Activated CD8-positive, alpha-beta T cell treated with anti-CD3 and anti-CD28 coated beads for 36 hours (primary cell): ENCODE measurements at regions of chr17 and their contacts with region 1.

Region 1: DNA sequence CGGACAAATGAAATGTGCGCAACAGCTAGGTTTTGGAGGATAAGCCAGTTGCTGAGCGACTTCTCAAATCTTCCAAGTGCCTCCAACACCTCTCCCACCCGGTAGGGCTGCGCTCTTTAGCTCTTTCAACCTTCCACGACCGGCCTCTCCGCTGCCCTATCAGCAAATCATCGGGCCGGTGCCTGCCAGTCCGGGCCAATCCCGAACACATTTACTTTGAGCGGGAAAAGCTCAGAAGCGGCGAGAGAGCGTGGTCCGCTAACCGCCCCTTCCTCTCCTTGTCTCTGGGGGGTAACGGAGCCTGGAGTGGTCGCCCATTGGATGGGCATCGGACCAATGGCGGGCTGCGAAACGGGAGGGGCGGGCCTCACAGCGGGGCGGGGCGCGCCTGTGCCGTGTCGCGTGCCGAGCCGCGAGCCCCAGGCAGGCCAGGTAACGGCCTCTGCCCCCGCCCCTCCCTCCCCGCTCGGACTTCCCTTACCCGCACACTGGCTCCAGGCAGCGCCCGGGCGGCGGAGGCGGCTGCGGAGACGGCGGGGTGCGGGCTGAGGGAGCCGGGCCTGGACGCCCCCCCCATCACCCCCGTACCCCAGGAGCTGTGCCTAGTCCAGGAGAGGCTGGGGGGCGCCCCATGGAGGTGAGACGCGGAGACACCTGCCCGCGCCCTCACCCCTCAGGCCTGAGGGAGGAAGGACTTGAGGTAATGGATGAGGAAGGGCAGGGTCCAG is at the start of gene MEIOC:
- DNase-seq: peak; percentile 46
- ATAC-seq: peak; percentile 88
- H3K4me3 Mint-ChIP-seq: peak within 1 kb of the TSS; percentile 67
- H3K27ac Mint-ChIP-seq: no peak within 1 kb of the TSS
- H3K4me1 Mint-ChIP-seq: peaks cover 7% of the 10 kb centered on the region
- H3K27me3 Mint-ChIP-seq: peaks cover 27% of the 10 kb centered on the region
- CTCF ChIP-seq: no peak
- total RNA-seq, gene MEIOC: 0.16 to 0.25 TPM

Region 2: GRCh38 chr17:44672479-44673093 is 16.4 kb after region 1 on chr17:
- CTCF ChIA-PET with region 1: interaction called, 10 read pairs
- POLR2A ChIA-PET with region 1: no interaction called
- intact Hi-C with region 1: no loop called
- DNase-seq: no peak
- ATAC-seq: no peak
- H3K4me3 Mint-ChIP-seq: no peak overlapping the region
- H3K27ac Mint-ChIP-seq: no peak overlapping the region
- H3K4me1 Mint-ChIP-seq: no peaks in the 10 kb centered on the region
- H3K27me3 Mint-ChIP-seq: no peaks in the 10 kb centered on the region
- CTCF ChIP-seq: peak; percentile 63

Region 3: DNA sequence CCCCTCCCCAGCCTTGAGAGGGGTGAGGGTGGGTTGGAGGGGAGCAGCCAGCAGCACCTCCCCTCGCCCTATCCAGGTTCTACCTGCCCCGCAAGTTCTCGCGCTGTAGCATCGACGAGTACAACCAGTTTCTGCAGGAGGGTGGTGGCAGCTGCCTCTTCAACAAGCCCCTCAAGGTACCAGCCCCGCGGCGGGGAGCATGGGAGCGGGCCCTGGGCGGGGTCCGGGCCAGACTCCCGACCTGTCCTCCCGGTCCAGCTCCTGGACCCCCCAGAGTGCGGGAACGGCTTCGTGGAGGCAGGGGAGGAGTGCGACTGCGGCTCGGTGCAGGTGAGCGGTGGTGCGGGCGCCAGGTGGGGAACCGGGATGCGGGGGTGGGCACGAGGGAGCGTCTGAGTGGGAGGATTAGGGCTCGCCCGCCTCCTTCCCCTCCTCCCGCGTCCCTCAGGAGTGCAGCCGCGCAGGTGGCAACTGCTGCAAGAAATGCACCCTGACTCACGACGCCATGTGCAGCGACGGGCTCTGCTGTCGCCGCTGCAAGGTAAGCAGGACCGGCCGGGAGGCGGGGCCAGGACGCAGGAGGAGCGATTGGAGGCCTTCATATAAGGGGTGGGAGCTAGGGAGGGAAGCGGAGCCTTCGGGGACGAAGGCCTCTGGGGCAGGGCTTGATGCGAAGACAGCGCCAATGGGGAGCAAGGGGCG is 119.1 kb after region 1 on chr17:
- CTCF ChIA-PET with region 1: no interaction called
- POLR2A ChIA-PET with region 1: no interaction called
- intact Hi-C with region 1: no loop called
- DNase-seq: peak; percentile 99
- ATAC-seq: peak; percentile 97
- H3K4me3 Mint-ChIP-seq: peak overlapping the region; percentile 79
- H3K27ac Mint-ChIP-seq: no peak overlapping the region
- H3K4me1 Mint-ChIP-seq: peaks cover 5% of the 10 kb centered on the region
- H3K27me3 Mint-ChIP-seq: peaks cover 6% of the 10 kb centered on the region
- CTCF ChIP-seq: peak; percentile 60